H1 (cell line): ENCODE measurements at regions of chr22 and their contacts with region 1.

Region 1: DNA sequence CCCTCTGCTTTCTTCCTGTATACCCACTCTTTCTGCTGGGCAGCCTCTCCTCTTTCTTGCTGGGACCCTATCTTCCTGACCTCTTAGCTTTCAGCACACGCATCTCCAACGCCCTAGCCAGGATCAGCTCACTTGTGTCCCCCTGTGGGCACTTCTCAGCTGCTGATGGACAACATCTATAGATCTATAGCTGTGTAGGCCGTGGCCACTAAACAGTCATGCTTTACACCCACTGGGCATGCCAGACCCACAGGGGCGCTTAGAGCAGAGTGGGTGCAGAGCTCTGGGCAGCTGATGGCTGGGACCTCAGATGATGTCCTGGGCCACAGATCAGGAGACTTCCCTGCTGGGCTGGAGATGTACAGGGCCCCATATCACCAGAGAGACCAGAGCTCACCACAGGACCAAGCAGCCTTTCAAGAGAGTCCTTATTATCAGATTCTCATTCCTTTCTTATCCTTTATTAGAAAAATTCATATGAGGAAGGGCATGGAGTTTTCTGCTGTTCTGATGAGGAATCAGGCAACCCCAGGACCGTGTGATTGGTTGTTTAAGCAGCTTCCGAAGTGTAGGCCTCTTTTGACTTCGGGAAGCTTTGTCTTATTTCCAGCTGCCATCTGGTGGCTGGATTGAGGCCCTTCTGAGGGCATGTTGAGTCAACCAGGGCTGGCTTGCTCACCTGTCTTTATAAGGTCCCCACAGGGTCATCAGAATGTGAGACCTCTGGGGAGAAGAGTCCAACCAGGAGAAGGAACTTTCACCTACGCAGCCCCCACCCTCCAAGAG is 60.5 kb downstream of the OSBP2 start:
- DNase-seq: peak; percentile 54 to 64
- H3K4me3 ChIP-seq: no peak overlapping the region
- H3K27ac ChIP-seq: no peak overlapping the region
- H3K4me1 ChIP-seq: peaks cover 0 to under 1% (median 0%) of the 10 kb centered on the region in 4 experiments; a peak in 2 of 7 replicates
- H3K27me3 ChIP-seq: no peaks in the 10 kb centered on the region
- CTCF ChIP-seq: peak; percentile 74 to 90 (median 80)
- EP300 ChIP-seq: no peak
- POLR2A ChIP-seq: no peak
- RAD21 ChIP-seq: peak; percentile 96 to 98

Region 2: DNA sequence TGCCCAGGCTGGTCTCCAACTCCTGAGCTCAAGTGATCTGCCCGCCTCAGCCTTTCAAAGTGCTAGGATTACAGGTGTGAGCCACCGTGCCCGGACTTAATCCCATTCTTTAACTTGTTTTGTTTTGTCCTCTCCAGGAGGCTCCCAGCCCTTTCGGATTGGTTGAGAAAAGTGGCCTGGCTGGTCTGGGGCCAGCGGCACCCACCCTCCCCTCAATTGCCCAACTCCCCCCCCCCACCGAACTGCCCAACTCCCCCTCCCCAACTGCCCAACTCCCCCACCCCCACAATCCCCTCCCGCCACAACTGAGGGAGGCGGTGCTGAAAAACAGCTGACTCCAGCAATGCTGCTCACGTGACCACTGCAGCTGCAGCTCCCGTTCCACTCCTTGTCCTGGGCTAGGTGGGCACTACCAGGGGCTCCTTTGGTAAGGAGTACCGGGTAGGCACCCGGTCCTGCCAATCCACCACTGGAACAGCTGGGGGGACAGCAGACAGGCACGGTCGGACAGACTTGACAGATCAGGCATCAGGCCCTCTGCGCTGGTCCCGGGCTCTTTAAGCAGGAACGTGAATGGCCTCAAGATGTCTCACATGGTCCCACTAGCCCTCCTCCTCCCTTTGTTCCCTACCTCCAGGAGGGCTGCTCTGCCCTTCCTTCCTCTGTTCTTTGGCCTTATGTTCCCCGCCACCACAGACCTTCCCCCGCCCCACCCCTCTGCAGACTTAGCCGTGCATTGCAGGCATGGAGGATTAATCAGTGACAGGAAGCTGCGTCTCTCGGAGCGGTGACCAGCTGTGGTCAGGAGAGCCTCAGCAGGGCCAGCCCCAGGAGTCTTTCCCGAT is 148.5 kb before region 1 on chr22 and contains the start of gene TCN2:
- CTCF ChIA-PET with region 1: interaction called, 18 read pairs
- POLR2A ChIA-PET with region 1: no interaction called
- DNase-seq: peak; percentile 61 to 91
- H3K4me3 ChIP-seq: peak within 1 kb of the TSS; percentile 48 to 83 (median 76)
- H3K27ac ChIP-seq: peak within 1 kb of the TSS; percentile 89
- H3K4me1 ChIP-seq: peaks cover 3 to 31% (median 12%) of the 10 kb centered on the region in 4 experiments
- H3K27me3 ChIP-seq: no peaks in the 10 kb centered on the region
- CTCF ChIP-seq: no peak
- EP300 ChIP-seq: peak in 1 of 2 experiments; percentile 0; a peak in 1 of 3 replicates
- POLR2A ChIP-seq: peak; percentile 74 to 81
- RAD21 ChIP-seq: no peak
- total RNA-seq, gene TCN2: 30.0 and 36.2 TPM in 2 replicates

Region 3: GRCh38 chr22:30628491-30628890 is 126.7 kb before region 1 on chr22:
- CTCF ChIA-PET with region 1: interaction called, 137 read pairs
- POLR2A ChIA-PET with region 1: interaction called, 12 read pairs
- DNase-seq: no peak
- H3K4me3 ChIP-seq: no peak overlapping the region
- H3K27ac ChIP-seq: no peak overlapping the region
- H3K4me1 ChIP-seq: no peaks in the 10 kb centered on the region
- H3K27me3 ChIP-seq: no peaks in the 10 kb centered on the region
- CTCF ChIP-seq: no peak
- EP300 ChIP-seq: no peak
- POLR2A ChIP-seq: peak in 1 of 2 experiments; percentile 23; a peak in 1 of 3 replicates
- RAD21 ChIP-seq: no peak

Region 4: GRCh38 chr22:30643055-30643875 is 111.9 kb before region 1 on chr22:
- CTCF ChIA-PET with region 1: interaction called, 137 read pairs
- POLR2A ChIA-PET with region 1: no interaction called
- DNase-seq: no peak
- H3K4me3 ChIP-seq: no peak overlapping the region
- H3K27ac ChIP-seq: no peak overlapping the region
- H3K4me1 ChIP-seq: no peaks in the 10 kb centered on the region
- H3K27me3 ChIP-seq: no peaks in the 10 kb centered on the region
- CTCF ChIP-seq: no peak
- EP300 ChIP-seq: no peak
- POLR2A ChIP-seq: no peak
- RAD21 ChIP-seq: no peak

Region 5: DNA sequence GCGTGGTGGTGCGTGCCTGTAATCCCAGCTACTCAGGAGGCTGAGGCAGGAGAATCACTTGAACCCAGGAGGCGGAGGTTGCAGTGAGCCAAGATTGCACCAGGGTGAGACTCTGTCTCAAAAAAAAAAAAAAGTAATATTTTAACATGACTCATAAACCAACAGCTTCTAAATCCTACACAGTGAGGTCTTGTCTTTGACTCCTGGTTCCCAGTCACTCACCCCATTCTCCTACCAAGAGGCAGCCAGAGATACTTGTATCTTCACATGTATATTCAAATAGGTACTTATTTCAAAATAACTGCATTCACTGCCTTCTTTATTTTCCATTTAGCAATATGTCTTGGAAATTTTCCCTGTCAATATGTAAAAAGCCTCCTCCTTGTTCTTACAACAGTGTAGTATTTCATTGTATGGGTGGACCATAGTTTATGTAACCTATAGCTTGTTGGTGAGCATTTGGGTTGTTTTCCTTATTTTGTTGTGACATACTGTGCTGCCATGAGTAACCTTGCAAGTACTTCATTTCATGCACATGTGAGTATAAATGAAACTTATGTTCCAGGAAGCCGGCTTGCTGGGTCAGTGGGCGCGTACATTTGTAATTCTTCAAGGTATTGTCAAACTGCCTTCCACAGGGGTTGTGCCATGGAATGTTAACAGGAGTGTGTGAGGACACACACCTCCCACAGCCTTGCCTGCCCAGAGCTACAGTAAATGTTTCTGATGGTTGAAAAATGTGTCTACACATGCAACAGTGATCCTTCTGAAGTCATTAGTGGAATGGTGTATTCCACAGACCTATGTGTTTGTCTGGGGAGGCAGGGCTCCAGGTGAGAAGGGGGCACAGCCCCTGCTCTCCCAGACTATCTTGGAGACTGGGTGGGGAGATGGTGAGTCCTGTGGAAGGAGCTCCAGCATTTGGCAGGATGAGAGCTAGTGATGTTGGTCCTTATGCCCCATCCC is 12.6 kb before region 1 on chr22:
- CTCF ChIA-PET with region 1: interaction called, 21 read pairs
- POLR2A ChIA-PET with region 1: interaction called, 3 read pairs
- DNase-seq: no peak
- H3K4me3 ChIP-seq: no peak overlapping the region
- H3K27ac ChIP-seq: no peak overlapping the region
- H3K4me1 ChIP-seq: peaks cover 0 to 12% (median 3%) of the 10 kb centered on the region in 4 experiments; a peak in 4 of 7 replicates
- H3K27me3 ChIP-seq: no peaks in the 10 kb centered on the region
- CTCF ChIP-seq: no peak
- EP300 ChIP-seq: no peak
- POLR2A ChIP-seq: no peak
- RAD21 ChIP-seq: no peak

Region 6: DNA sequence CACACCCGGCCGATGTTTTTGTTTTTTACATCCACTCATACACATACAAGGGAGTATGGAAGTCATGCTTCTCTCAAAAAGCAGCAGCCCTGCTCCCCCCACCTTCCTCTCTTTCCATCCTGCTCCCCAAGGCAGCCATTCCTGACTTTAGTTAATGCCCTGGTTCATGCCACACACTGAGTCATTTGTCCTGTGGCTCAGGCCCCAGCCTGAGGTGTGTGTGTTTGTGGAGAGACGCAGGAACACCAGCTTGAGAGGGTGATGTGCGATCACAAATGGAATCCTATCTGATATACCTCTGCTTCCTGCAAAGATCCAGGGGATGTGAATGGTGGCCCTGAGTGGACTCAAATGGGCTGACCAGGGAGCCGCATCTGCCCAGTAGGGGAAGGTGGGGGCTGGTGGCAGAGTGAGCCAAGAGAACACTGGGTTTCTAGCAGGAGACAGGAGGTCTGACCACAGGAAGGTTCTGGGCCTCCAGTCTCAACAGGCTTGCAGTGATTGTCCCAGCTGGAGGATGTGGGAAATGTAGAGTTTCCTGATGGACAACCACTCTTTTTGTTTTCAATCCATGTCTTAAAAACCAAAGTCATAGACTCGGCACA is 26.2 kb after region 1 on chr22:
- CTCF ChIA-PET with region 1: no interaction called
- POLR2A ChIA-PET with region 1: no interaction called
- DNase-seq: no peak
- H3K4me3 ChIP-seq: no peak overlapping the region
- H3K27ac ChIP-seq: no peak overlapping the region
- H3K4me1 ChIP-seq: no peaks in the 10 kb centered on the region
- H3K27me3 ChIP-seq: no peaks in the 10 kb centered on the region
- CTCF ChIP-seq: no peak
- EP300 ChIP-seq: no peak
- POLR2A ChIP-seq: no peak
- RAD21 ChIP-seq: no peak

Region 7: GRCh38 chr22:30890686-30891442 is 135.7 kb after region 1 on chr22:
- CTCF ChIA-PET with region 1: interaction called, 14 read pairs
- POLR2A ChIA-PET with region 1: no interaction called
- DNase-seq: peak in 1 of 2 experiments; percentile 82
- H3K4me3 ChIP-seq: no peak overlapping the region
- H3K27ac ChIP-seq: no peak overlapping the region
- H3K4me1 ChIP-seq: peaks cover 0 to 4% (median 4%) of the 10 kb centered on the region in 4 experiments; a peak in 5 of 7 replicates
- H3K27me3 ChIP-seq: no peaks in the 10 kb centered on the region
- CTCF ChIP-seq: peak; percentile 86 to 99 (median 93)
- EP300 ChIP-seq: no peak
- POLR2A ChIP-seq: no peak
- RAD21 ChIP-seq: peak; percentile 72 to 74

Region 8: GRCh38 chr22:31080848-31081649 is 325.9 kb after region 1 on chr22 and contains the start of gene SMTN:
- CTCF ChIA-PET with region 1: no interaction called
- POLR2A ChIA-PET with region 1: no interaction called
- DNase-seq: peak; percentile 79 to 99
- H3K4me3 ChIP-seq: peak within 1 kb of the TSS; percentile 69 to 80 (median 74)
- H3K27ac ChIP-seq: peak within 1 kb of the TSS; percentile 84; the same call in 1 of the 2 replicates
- H3K4me1 ChIP-seq: peaks cover 0 to 27% (median 16%) of the 10 kb centered on the region in 4 experiments; a peak in 6 of 7 replicates
- H3K27me3 ChIP-seq: peaks cover 0 to 5% (median 2%) of the 10 kb centered on the region in 4 experiments; a peak in 3 of 7 replicates
- CTCF ChIP-seq: no peak
- EP300 ChIP-seq: no peak
- POLR2A ChIP-seq: peak; percentile 76 to 88
- RAD21 ChIP-seq: no peak
- total RNA-seq, gene SMTN: 20.8 and 26.5 TPM in 2 replicates